ENCODE measurements at regions of chr12 and their contacts with region 1.

Region 1: GRCh38 chr12:24754690-24755638 is 193.9 kb downstream of the BCAT1 start:
- DNase-seq: no peak
- H3K4me3 Mint-ChIP-seq: peak overlapping the region; percentile 54
- H3K27ac Mint-ChIP-seq: peak overlapping the region; percentile 85
- H3K4me1 Mint-ChIP-seq: peaks cover 51% of the 10 kb centered on the region
- H3K27me3 Mint-ChIP-seq: no peaks in the 10 kb centered on the region

Region 2: GRCh38 chr12:24767016-24767415 is 12.1 kb after region 1 on chr12:
- intact Hi-C with region 1: loop called (anchors 1 kb)
- DNase-seq: no peak
- H3K4me3 Mint-ChIP-seq: no peak overlapping the region
- H3K27ac Mint-ChIP-seq: no peak overlapping the region
- H3K4me1 Mint-ChIP-seq: peaks cover 7% of the 10 kb centered on the region
- H3K27me3 Mint-ChIP-seq: no peaks in the 10 kb centered on the region

Region 3: DNA sequence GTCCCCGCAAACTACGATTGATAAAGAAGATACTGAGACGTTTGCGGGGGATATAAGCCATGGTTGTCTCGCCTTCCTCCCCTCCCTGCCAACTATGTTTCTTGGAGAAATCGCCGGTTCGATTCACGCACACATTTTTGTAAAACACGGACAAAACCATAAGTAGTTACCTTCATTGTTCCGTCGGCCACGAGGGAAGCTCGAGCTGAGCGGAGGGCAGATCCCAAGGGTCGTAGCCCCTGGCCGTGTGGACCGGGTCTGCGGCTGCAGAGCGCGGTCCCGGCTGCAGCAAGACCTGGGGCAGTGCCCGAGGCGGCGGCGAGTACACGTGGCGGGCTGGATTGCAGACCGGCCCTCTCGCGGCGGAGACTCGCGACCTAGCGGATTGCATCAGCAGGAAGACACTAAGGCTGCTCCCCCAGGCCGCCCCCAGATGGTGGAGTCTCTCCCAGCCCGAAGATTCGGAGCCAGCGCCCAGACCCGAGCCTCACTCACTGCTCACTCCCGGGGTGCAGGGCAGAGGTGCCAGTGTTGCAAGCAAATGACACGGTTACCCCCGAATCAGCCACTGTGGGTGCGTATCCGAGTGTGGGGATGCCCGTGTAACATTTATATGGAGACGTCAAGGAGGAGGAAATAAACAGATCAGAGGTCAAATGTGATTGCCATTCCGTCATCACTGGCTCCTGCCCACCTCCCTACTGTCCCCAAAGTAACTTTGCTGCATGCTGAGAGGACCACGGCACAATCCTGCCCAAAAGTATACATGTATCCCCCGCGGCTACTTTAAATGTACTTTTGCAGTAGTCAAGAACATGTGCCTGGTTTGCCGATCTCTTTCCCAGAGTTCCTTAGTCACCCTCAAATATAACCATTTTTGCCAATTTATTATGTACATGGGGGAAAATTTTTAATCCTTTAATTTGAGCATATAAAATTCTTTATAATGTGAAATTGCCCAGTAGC is 194.1 kb after region 1 on chr12 and contains the start of gene BCAT1:
- intact Hi-C with region 1: no loop called
- DNase-seq: peak; percentile 33
- H3K4me3 Mint-ChIP-seq: peak within 1 kb of the TSS; percentile 92
- H3K27ac Mint-ChIP-seq: peak within 1 kb of the TSS; percentile 96
- H3K4me1 Mint-ChIP-seq: peaks cover 55% of the 10 kb centered on the region
- H3K27me3 Mint-ChIP-seq: peaks cover 3% of the 10 kb centered on the region
- total RNA-seq, gene BCAT1: 37.3 and 42.0 TPM in 2 replicates